CD4-positive, alpha-beta T cell (primary cell): ENCODE measurements at regions of chr12 and their contacts with region 1.

Region 1: GRCh38 chr12:132872975-132873421 is 14.4 kb downstream of the CHFR start:
- DNase-seq: peak in 10 of 14 experiments; percentile 2 to 57 (median 32)
- ATAC-seq: peak; percentile 77
- H3K4me3 ChIP-seq: peak overlapping the region; percentile 10
- H3K4me3 Mint-ChIP-seq: peak overlapping the region; percentile 71
- H3K27ac ChIP-seq: peak overlapping the region in 1 of 2 donors; percentile 57
- H3K27ac Mint-ChIP-seq: peak overlapping the region; percentile 93
- H3K4me1 ChIP-seq: peaks cover 21% of the 10 kb centered on the region
- H3K4me1 Mint-ChIP-seq: peaks cover 36% of the 10 kb centered on the region
- H3K27me3 ChIP-seq: no peaks in the 10 kb centered on the region
- H3K27me3 Mint-ChIP-seq: no peaks in the 10 kb centered on the region
- CTCF ChIP-seq: no peak

Region 2: DNA sequence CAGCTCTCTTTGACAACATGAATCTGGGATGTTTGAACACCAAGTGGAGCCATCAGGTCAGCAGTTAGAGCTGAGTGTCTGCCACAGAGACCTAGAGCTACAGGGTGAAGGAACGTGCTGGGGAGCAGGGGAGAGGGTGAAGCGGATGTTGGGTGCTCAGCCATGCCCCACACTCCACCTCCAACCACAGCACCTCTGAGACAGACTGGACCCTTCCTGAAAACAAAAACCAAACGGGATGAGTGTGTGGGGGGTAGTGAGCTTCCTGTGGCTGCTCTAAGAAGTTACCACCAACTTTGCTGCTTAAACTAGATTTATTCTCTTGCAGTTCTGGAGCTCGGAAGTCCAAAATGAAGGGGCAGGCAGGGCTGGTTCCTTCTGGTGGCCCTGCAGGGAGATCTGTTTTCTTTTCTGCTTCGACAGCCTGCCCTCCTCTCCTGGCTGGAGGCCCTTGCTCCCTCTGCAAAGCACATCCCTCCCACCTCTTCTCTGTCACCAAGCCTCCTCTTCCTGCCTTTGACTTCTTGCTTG is 38.8 kb before region 1 on chr12:
- CTCF ChIA-PET with region 1: no interaction called
- POLR2A ChIA-PET with region 1: interaction called, 12 read pairs
- intact Hi-C with region 1: loop called (anchors 5 kb)
- DNase-seq: peak in 10 of 14 experiments; percentile 6 to 64 (median 26)
- ATAC-seq: peak; percentile 78
- H3K4me3 ChIP-seq: no peak overlapping the region
- H3K4me3 Mint-ChIP-seq: peak overlapping the region; percentile 82
- H3K27ac ChIP-seq: peak overlapping the region; percentile 25 to 38
- H3K27ac Mint-ChIP-seq: peak overlapping the region; percentile 96
- H3K4me1 ChIP-seq: peaks cover 42% of the 10 kb centered on the region
- H3K4me1 Mint-ChIP-seq: peaks cover 45% of the 10 kb centered on the region
- H3K27me3 ChIP-seq: no peaks in the 10 kb centered on the region
- H3K27me3 Mint-ChIP-seq: no peaks in the 10 kb centered on the region
- CTCF ChIP-seq: no peak